ENCODE measurements at regions of chr19 and their contacts with region 1.

Region 1: DNA sequence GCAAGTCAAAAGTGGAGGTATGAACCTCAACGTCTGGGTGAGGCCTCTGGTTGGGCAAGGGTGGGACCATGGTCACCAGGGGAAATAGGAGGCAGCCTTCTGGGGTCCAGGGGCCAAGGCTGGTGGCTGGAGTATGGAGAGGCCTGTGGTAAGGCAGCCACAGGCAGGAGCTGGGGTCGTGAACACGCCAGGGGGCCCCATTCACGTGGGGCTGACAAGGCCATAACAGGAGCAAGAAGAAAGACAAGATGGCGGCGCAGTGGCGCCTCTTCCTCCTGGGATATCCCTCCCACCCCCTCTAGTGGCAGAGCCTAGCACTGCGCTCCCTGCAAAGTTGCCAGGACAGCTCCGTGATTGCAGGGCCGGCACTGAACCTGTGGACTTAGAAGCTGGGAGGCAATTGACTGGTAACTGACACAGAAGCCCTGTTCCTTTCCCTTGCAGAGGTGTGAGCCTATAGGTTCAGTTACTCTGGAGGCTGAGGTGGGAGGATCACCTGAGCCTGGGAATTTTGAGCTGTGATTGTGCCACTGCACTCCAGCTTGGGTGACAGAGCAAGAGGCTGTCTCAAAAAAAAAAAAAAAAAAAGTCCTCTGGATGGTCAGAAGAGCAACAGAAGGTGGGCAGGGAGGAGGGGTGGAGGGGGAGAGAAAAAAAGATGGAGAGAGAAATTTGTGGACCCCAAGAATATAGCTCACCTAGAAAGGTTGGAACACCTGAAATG is 19.7 kb upstream of the EDDM13 start:
- DNase-seq: peak; percentile 33
- H3K4me3 ChIP-seq: no peak overlapping the region
- H3K27ac ChIP-seq: no peak overlapping the region
- H3K27me3 ChIP-seq: no peaks in the 10 kb centered on the region
- CTCF ChIP-seq: peak; percentile 86

Region 2: DNA sequence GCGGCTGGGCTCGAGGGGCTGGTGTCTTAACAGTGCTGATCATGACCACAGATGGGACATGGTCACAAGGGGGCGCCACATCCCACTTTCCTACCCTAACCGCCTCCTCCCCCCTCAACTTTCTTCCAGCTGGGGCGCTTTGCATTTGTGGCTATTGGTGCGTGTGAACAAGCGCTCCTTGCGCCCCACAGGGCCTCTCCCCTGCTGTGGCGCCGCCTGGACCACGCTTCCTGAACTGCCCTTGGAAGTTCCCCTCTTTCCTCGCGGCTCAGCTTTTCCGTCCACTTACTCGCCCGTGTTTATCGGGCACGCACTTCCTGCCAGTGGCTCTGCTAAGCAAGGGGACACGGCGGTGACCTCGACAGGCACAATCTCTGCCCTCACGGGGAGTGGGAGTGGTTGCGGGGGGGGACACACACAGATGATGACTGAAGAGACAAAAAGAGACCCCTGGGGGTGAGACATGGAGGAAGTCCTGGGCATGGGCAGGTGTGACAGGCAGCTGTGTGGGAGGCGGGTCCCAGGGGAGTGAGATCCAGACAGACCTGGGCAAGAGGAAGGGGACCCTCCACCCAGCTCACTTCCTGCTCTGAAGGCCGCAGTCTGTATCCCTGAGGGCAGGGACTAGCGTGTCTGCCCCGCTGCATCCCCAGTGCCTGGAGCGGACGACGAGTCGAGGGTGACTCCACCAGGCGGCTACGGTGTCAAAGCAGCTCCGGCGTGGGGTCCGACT is 172.0 kb before region 1 on chr19:
- CTCF ChIA-PET with region 1: interaction called, 37 read pairs
- POLR2A ChIA-PET with region 1: no interaction called
- DNase-seq: peak; percentile 37
- H3K4me3 ChIP-seq: peak overlapping the region; percentile 49
- H3K27ac ChIP-seq: no peak overlapping the region
- H3K27me3 ChIP-seq: no peaks in the 10 kb centered on the region
- CTCF ChIP-seq: peak; percentile 68

Region 3: DNA sequence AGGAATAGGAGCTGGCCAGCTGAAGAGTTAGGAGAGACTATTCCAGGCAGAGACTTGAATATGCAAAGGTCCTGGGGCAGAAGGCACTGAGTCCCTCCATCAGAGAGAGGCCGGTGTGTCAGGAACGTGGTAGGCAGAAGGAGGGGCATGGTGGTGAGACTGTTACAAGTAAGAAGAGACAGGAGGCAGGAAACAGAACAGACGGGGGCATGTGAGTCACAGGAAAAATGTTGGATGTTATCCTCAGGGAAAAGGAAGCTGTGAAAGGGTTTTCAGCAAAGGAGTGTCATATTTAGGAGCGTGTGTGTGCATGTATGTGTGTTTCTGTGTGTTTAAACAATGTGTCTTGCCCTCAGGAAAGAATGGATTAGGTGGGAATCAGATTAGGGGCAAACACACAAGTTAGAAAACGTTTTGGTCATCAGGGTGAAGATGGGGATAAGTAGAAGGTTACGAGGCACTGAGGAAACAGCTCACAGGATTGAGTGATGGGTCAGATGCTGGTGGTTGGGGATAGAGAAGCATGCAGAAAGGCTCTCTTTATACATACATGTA is 20.8 kb after region 1 on chr19:
- CTCF ChIA-PET with region 1: interaction called, 20 read pairs
- POLR2A ChIA-PET with region 1: no interaction called
- DNase-seq: no peak
- H3K4me3 ChIP-seq: no peak overlapping the region
- H3K27ac ChIP-seq: no peak overlapping the region
- H3K27me3 ChIP-seq: no peaks in the 10 kb centered on the region
- CTCF ChIP-seq: no peak

Region 4: GRCh38 chr19:56314562-56315077 is 61.8 kb after region 1 on chr19 and contains the start of gene ZSCAN5A:
- CTCF ChIA-PET with region 1: interaction called, 33 read pairs
- POLR2A ChIA-PET with region 1: interaction called, 4 read pairs
- DNase-seq: peak; percentile 87
- H3K4me3 ChIP-seq: peak within 1 kb of the TSS; percentile 95
- H3K27ac ChIP-seq: peak within 1 kb of the TSS; percentile 97
- H3K27me3 ChIP-seq: no peaks in the 10 kb centered on the region
- CTCF ChIP-seq: no peak
- polyA plus RNA-seq, gene ZSCAN5A: 3.7 and 5.8 TPM in 2 replicates

Region 5: GRCh38 chr19:56350416-56351045 is 97.7 kb after region 1 on chr19:
- CTCF ChIA-PET with region 1: interaction called, 41 read pairs
- POLR2A ChIA-PET with region 1: no interaction called
- DNase-seq: peak; percentile 3
- H3K4me3 ChIP-seq: no peak overlapping the region
- H3K27ac ChIP-seq: no peak overlapping the region
- H3K27me3 ChIP-seq: no peaks in the 10 kb centered on the region
- CTCF ChIP-seq: peak; percentile 93